ENCODE measurements at regions of chr3 and their contacts with region 1.

Region 1: DNA sequence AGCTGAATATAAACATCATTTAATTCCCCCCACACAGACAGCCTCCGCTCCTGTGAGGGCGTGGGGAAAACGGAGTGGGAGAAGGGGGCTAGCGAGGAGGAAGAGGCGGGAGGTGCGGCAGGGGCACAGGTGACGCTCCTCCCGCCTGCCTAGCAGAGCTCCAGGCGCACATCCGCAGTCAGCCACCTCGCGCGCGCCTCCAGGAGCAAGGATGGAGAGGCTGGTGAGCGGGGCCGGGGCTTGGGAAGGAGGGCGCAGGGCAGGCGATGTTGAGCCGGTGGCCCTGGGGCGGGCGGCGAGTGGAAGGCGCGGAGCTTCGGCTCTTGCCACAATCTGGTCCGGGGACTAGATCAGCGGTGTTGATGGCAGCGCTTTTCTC is at the start of gene CD200:
- DNase-seq: peak; percentile 75
- H3K4me3 Mint-ChIP-seq: peak within 1 kb of the TSS; percentile 94
- H3K27ac Mint-ChIP-seq: peak within 1 kb of the TSS; percentile 99
- H3K4me1 Mint-ChIP-seq: peaks cover 39% of the 10 kb centered on the region
- H3K27me3 Mint-ChIP-seq: no peaks in the 10 kb centered on the region
- total RNA-seq, gene CD200: 50.0 to 53.6 TPM

Region 2: GRCh38 chr3:111547631-111548030 is 785.4 kb before region 1 on chr3:
- CTCF ChIA-PET with region 1: no interaction called
- intact Hi-C with region 1: loop called (anchors 5 kb)
- DNase-seq: peak; percentile 74
- H3K4me3 Mint-ChIP-seq: no peak overlapping the region
- H3K27ac Mint-ChIP-seq: no peak overlapping the region
- H3K4me1 Mint-ChIP-seq: peaks cover 39% of the 10 kb centered on the region
- H3K27me3 Mint-ChIP-seq: no peaks in the 10 kb centered on the region

Region 3: DNA sequence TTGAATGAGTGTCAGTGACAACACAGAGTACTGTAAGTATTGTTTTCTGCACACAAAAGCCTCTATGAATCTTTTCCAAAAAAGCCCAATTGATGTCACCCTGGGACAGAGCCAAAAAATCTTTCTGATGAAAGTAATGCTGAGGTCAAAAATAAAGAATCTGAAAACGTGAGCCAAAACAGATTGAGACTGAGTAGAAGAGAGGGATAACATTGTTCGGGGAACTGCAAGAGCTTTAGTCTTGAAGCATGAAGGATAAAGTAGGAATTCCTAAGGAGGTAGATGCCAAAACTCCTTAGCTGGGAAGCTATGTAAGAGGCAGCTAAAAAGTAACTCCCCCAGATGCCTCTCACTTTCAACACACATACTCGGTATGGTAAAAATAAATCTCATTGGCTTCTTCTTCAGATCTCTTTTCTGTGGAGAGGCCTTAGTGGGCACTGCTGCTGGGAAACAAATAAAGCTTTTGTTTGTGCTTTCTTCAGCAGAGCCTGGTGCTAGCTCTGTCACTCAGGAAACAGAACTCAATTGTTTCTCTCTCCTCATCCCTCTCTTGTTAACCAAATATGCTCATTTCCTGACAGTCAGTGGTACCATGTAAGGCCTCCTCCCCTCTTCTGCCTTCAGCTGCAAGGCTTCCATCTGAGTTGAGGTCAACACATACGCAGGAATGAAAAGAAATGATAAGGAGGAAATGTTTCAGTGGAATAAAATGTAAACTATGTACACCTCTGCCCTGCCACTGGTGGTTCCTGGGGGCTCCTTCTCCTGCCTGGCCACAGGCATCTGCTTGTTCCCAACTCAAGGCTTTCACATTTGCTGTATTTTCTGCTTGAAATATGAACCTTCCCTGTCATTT is 58.0 kb after region 1 on chr3:
- CTCF ChIA-PET with region 1: no interaction called
- intact Hi-C with region 1: loop called (anchors 1 kb)
- DNase-seq: peak; percentile 36
- H3K4me3 Mint-ChIP-seq: peak overlapping the region; percentile 10
- H3K27ac Mint-ChIP-seq: peak overlapping the region; percentile 66
- H3K4me1 Mint-ChIP-seq: peaks cover 58% of the 10 kb centered on the region
- H3K27me3 Mint-ChIP-seq: no peaks in the 10 kb centered on the region

Region 4: GRCh38 chr3:112460519-112461195 is 127.7 kb after region 1 on chr3:
- CTCF ChIA-PET with region 1: interaction called, 3 read pairs
- intact Hi-C with region 1: loop called (anchors 1 kb)
- DNase-seq: no peak
- H3K4me3 Mint-ChIP-seq: no peak overlapping the region
- H3K27ac Mint-ChIP-seq: peak overlapping the region; percentile 79
- H3K4me1 Mint-ChIP-seq: peaks cover 60% of the 10 kb centered on the region
- H3K27me3 Mint-ChIP-seq: no peaks in the 10 kb centered on the region

Region 5: DNA sequence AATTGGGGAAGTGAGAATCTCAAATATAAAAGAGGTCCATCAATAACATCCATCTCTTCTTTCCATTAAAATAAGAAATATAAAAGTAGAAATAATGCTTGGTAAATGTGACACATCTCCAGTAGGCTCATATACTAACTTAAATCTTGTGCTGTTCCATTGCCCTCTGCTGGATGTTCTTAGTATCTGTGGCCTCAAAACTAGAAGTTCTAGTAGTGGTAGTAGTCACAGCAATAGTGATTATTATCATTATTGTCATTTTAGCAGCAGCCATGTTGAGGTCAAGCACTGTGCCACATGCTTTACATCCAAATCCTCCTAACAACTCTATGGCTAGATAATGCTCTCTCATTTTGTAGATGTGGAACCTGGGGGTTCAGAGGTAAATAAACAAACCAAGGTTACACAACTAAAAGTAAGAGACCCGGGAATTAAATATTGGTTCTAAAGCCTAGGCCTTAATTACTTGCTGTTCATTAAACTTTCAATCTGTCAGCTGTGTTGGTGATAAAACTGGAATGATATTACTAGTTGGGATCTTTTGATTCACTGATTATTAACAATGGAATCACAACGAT is 186.5 kb after region 1 on chr3:
- CTCF ChIA-PET with region 1: interaction called, 13 read pairs
- intact Hi-C with region 1: no loop called
- DNase-seq: peak; percentile 53
- H3K4me3 Mint-ChIP-seq: no peak overlapping the region
- H3K27ac Mint-ChIP-seq: peak overlapping the region; percentile 84
- H3K4me1 Mint-ChIP-seq: peaks cover 34% of the 10 kb centered on the region
- H3K27me3 Mint-ChIP-seq: no peaks in the 10 kb centered on the region

Region 6: DNA sequence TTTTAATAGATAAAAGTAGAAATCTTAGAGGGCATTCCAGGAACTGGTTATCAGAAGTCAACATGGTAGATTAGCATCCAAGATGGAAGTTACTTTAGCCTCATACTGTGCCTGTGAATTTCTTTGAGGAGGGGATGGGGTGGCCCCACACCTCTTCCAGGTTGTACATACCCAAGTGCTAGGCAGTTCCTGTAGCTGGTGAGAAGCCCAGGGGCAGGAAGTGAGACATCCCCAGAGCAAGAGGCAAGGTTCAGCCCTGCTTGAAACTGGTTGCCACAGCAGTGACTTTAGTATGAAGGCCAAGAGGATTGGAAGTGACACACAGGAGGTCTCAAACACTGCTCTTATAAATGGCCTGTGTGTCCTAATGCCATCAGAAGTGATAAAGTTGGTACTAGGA is 669.7 kb after region 1 on chr3:
- CTCF ChIA-PET with region 1: no interaction called
- intact Hi-C with region 1: loop called (anchors 5 kb)
- DNase-seq: peak; percentile 90
- H3K4me3 Mint-ChIP-seq: peak overlapping the region; percentile 42
- H3K27ac Mint-ChIP-seq: peak overlapping the region; percentile 95
- H3K4me1 Mint-ChIP-seq: peaks cover 86% of the 10 kb centered on the region
- H3K27me3 Mint-ChIP-seq: no peaks in the 10 kb centered on the region

Measured in activated naive CD4-positive, alpha-beta T cell treated with anti-CD3 and anti-CD28 coated beads for 36 hours (primary cell).